Activated naive CD4-positive, alpha-beta T cell treated with anti-CD3 and anti-CD28 coated beads for 36 hours (primary cell): ENCODE measurements at regions of chr7 and their contacts with region 1.

Region 1: GRCh38 chr7:128862571-128863432 is at the start of gene ATP6V1F:
- DNase-seq: peak; percentile 99
- H3K4me3 Mint-ChIP-seq: peak within 1 kb of the TSS; percentile 91
- H3K27ac Mint-ChIP-seq: peak within 1 kb of the TSS; percentile 84
- H3K4me1 Mint-ChIP-seq: peaks cover 15% of the 10 kb centered on the region
- H3K27me3 Mint-ChIP-seq: no peaks in the 10 kb centered on the region
- total RNA-seq, gene ATP6V1F: 129 to 142 TPM

Region 2: DNA sequence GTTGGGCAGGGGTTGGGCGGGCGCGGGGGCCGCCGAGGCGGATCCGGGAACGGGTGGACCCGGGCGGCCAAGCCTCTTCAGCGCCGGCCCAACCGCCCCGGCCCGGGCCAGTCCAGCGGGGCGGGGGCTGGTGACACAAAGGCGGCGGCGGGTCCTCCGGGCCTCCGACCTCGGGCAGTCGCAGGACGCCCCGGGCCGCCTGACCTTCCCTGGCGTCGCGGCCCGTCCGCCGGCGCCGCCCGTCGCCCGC is 332.0 kb before region 1 on chr7:
- CTCF ChIA-PET with region 1: no interaction called
- intact Hi-C with region 1: loop called (anchors 1 kb)
- DNase-seq: no peak
- H3K4me3 Mint-ChIP-seq: no peak overlapping the region
- H3K27ac Mint-ChIP-seq: no peak overlapping the region
- H3K4me1 Mint-ChIP-seq: peaks cover 32% of the 10 kb centered on the region
- H3K27me3 Mint-ChIP-seq: no peaks in the 10 kb centered on the region

Region 3: DNA sequence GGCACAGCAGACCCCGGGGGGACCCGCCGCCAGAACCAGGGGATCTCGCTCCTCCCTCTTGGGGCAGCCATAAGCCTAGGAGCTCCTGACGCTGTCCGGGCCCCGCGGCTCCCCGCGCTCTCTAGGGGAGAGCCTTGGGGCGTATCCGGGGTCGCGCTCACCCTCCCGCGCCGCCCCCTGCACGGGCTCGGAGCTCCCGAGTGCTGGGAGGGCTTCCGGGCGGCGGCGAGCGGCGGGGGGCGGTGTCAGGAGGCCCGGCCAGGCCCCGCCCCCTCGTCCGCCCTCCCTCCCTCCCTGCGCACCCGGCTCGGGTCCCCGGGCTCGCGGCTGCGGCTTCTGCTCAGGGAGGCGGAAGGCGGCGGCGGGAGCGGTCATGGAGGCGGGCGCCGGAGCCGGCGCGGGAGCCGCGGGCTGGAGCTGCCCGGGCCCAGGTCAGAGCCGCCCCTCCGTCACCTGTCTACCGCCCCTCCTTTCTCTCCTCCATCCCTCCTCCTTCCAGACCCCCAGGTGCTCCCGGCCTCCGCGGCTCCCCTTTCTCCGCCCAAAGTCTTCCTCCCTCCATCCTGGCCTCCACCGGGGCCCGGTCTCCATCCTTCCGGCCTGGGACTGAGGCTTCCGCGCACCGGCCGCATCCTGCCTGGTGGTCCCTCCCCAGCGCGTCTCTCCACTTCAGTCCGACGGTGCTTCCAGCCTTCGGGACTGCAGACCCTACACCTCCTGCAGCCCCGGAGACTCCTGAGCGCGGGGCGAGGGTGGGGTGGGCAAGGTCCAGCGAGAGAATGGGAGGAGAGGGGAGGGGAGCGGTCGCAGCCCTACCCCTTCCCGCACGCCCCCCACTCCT is 71.5 kb before region 1 on chr7:
- CTCF ChIA-PET with region 1: interaction called, 3 read pairs
- intact Hi-C with region 1: loop called (anchors 1 kb)
- DNase-seq: peak; percentile 79
- H3K4me3 Mint-ChIP-seq: peak overlapping the region; percentile 82
- H3K27ac Mint-ChIP-seq: no peak overlapping the region
- H3K4me1 Mint-ChIP-seq: peaks cover 3% of the 10 kb centered on the region
- H3K27me3 Mint-ChIP-seq: peaks cover 3% of the 10 kb centered on the region

Region 4: GRCh38 chr7:129054438-129055293 is 191.9 kb after region 1 on chr7 and contains the start of gene TNPO3:
- CTCF ChIA-PET with region 1: no interaction called
- intact Hi-C with region 1: loop called (anchors 1 kb)
- DNase-seq: peak; percentile 95
- H3K4me3 Mint-ChIP-seq: peak within 1 kb of the TSS; percentile 95
- H3K27ac Mint-ChIP-seq: peak within 1 kb of the TSS; percentile 99
- H3K4me1 Mint-ChIP-seq: peaks cover 35% of the 10 kb centered on the region
- H3K27me3 Mint-ChIP-seq: peaks cover 3% of the 10 kb centered on the region
- total RNA-seq, gene TNPO3: 65.7 to 66.4 TPM